ENCODE measurements at regions of chr3 and their contacts with region 1.

Region 1: DNA sequence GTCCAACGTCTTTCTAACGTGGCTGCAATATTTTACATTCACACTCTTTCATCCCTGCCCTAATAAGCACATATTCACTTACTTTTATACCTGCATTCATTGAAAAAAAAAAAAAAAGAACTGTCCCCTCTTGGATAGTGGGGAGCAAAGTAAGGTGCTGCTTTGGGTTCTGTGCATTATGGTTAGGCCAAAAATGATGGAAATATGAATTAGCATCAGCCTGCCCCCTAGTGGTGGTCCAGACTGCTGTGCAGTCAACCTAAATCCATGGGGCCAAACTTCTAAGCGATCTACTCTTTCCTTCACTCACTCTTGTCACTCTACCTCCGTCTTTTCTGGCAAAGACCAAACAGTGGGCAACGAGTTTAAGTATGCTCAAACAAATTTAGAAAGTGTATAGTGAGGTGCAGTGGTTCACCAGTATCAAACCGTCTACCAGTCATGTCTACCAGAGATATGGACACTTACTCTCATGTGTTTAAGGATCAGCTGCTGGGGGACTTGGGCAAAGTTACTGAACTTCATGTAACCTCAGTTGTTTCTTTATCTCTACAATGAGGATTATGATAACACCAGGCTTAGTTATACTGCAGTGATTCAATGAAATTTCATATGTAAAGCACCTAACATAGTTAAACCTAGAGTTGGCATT is 61.5 kb upstream of the GRM7 start:
- DNase-seq: peak; percentile 23
- ATAC-seq: peak; percentile 84
- H3K4me3 ChIP-seq: no peak overlapping the region
- H3K27ac ChIP-seq: no peak overlapping the region
- H3K4me1 ChIP-seq: no peaks in the 10 kb centered on the region
- H3K27me3 ChIP-seq: no peaks in the 10 kb centered on the region
- CTCF ChIP-seq: peak; percentile 70
- EP300 ChIP-seq: no peak
- POLR2A ChIP-seq: no peak
- RAD21 ChIP-seq: no peak

Region 2: DNA sequence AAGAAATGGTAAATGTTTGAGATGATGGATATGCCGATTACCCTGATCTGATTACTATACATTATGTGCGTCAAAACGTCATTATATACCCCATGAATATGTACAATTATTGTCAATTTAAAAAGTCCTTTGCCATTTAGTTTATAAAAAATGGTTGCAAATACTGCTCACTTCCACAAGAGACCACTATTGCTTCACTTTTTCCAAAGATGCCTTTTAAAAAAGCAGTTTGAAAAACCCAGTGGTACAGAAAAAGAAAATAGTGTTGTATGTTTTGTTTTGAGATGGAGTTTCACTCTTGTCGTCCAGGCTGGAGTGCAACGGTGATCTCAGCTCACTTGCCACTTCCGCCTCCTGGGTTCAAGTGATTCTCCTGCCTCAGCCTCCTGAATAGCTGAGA is 1572.6 kb before region 1 on chr3:
- CTCF ChIA-PET with region 1: no interaction called
- POLR2A ChIA-PET with region 1: no interaction called
- in situ Hi-C with region 1: no loop called
- intact Hi-C with region 1: loop called (anchors 2 kb)
- DNase-seq: peak; percentile 5
- ATAC-seq: 0 out of 3 replicates have a peak, but pooled peaks have one; percentile 22
- H3K4me3 ChIP-seq: no peak overlapping the region
- H3K27ac ChIP-seq: no peak overlapping the region
- H3K4me1 ChIP-seq: no peaks in the 10 kb centered on the region
- H3K27me3 ChIP-seq: peaks cover 1 to 24% of the 10 kb centered on the region in 2 experiments; a peak in 2 of 5 replicates
- CTCF ChIP-seq: peak; percentile 53
- EP300 ChIP-seq: no peak
- POLR2A ChIP-seq: no peak
- RAD21 ChIP-seq: no peak; the same call in 1 of the 2 replicates

Region 3: DNA sequence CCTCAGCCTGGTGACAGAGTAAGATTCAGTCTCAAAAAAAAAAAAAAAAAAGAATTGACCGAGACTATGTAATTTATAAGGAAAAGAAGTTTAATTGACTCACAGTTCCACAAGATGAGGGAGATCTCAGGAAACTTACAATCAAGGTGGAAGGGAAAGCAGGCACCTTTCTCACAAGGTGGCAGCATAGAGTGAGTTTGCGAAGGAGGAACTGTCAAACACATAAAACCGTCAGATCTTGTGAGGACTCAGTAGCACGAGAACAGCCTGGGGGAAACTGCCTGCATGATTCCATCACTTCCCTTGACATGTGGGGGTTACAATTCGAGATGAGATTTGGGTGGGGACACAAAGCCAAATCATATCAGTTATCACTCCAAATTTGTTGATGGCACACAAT is 1230.9 kb before region 1 on chr3:
- CTCF ChIA-PET with region 1: no interaction called
- POLR2A ChIA-PET with region 1: no interaction called
- in situ Hi-C with region 1: no loop called
- intact Hi-C with region 1: loop called (anchors 10 kb)
- DNase-seq: peak; percentile 2
- ATAC-seq: 0 out of 3 replicates have a peak, but pooled peaks have one; percentile 31
- H3K4me3 ChIP-seq: no peak overlapping the region
- H3K27ac ChIP-seq: no peak overlapping the region
- H3K4me1 ChIP-seq: no peaks in the 10 kb centered on the region
- H3K27me3 ChIP-seq: no peaks in the 10 kb centered on the region
- CTCF ChIP-seq: peak; percentile 48
- EP300 ChIP-seq: no peak
- POLR2A ChIP-seq: no peak
- RAD21 ChIP-seq: no peak

Region 4: DNA sequence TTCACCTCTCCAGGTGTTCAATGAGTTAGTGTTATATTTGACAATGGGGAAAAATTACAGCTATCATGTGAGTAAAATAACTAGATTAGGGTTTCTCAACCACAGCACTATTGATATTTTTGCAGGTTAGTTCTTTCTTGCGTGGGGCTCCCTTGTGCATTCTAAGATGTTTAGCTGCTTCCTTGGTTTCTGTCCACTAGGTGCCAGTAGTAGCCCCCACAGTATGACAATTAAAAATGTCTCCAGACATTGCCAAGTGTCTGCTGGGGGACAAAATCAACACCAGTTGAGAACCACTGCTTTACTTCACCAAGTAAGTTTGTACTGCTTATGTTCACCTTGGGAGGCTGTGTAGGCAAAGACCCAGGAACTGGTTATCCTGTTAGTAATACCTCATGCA is 993.2 kb before region 1 on chr3:
- CTCF ChIA-PET with region 1: no interaction called
- POLR2A ChIA-PET with region 1: no interaction called
- in situ Hi-C with region 1: no loop called
- intact Hi-C with region 1: loop called (anchors 5 kb)
- DNase-seq: no peak
- ATAC-seq: no peak
- H3K4me3 ChIP-seq: no peak overlapping the region
- H3K27ac ChIP-seq: no peak overlapping the region
- H3K4me1 ChIP-seq: no peaks in the 10 kb centered on the region
- H3K27me3 ChIP-seq: no peaks in the 10 kb centered on the region
- CTCF ChIP-seq: 0 out of 2 replicates have a peak, but pooled peaks have one; percentile 4
- EP300 ChIP-seq: no peak
- POLR2A ChIP-seq: no peak
- RAD21 ChIP-seq: no peak